Activated T-helper 2 cell treated with anti-CD3 and anti-CD28 coated beads, Interferon-gamma antibody, Interleukin-2, Interleukin-4, amounts not matched to agents 10 μg/mL and 5 μg/mL and 100 μg/mL, durations not matched to agents 14 hours and 24 hours and 36 hours (primary cell): ENCODE measurements at regions of chr7 and their contacts with region 1.

Region 1: GRCh38 chr7:135147899-135148721 is at the start of gene TMEM140:
- DNase-seq: peak; percentile 63
- H3K4me3 Mint-ChIP-seq: peak within 1 kb of the TSS; percentile 86
- H3K27ac Mint-ChIP-seq: peak within 1 kb of the TSS; percentile 97
- H3K4me1 Mint-ChIP-seq: peaks cover 65% of the 10 kb centered on the region
- H3K27me3 Mint-ChIP-seq: no peaks in the 10 kb centered on the region
- total RNA-seq, gene TMEM140: 3.0 and 4.8 TPM in 2 replicates

Region 2: DNA sequence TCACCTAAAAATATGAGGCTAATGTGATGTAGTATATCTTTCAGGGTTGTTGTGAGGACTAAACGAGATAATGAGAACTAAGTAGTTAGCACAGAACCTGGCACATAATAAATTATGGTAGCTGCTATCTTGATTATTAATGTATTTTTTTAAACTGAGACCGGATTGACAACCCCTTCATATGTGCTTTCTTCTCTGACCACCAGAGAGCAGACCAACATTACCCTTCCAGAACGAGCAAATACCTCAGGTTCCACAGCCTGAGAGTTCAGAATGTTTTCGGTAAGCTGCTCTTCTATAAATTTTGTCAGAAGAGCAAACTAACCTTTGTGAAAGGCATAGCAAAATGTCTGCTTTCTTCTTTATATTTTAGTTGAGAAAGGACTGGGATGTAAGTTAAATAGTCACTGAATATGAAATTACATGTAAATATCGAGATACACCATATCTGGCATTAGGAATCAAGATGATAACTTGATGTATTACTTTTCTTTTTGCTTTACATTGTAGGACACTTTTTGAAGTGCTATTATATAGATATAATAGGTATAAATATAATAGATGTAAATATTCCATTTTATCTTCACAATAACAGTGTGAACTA is 515.1 kb before region 1 on chr7:
- intact Hi-C with region 1: loop called (anchors 5 kb)
- DNase-seq: no peak
- H3K4me3 Mint-ChIP-seq: no peak overlapping the region
- H3K27ac Mint-ChIP-seq: no peak overlapping the region
- H3K4me1 Mint-ChIP-seq: peaks cover 25% of the 10 kb centered on the region
- H3K27me3 Mint-ChIP-seq: peaks cover 8% of the 10 kb centered on the region

Region 3: DNA sequence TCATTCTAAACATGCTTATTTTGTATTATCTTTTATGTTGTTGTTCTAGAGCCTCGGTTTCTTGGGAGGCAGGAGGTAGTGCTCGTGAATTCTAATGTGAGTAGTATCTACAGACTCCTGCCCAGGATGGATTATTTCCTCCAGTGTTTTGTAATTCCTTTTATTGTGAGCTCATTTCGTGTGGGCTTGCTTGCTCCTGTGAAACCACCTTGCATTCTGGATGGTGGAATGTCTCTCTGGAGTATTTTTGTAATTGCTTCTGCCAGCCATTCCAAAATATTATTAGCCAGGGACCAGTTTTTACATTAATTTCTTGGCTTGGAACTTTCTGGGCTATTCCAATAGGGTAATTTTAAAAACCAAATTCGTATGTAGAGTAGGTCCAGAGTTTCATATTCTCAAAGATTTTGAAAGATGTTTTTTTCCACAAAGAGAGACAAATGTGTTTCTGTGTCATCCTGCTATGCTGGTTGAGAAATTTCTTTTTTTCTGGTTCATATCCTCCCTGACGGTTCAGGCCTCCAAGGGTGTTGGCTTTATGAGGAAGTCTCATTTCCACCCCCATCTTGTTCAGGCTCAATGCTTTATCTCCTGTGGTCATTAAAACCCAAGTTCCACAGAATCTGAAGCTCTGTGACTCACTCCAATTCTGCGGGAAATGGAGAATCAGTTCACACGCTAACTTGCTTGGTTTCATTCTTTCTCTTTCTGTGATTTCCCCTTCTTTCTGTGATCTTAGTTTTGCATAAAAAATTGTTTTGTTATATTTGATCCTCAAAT is 410.4 kb before region 1 on chr7:
- intact Hi-C with region 1: loop called (anchors 5 kb)
- DNase-seq: peak; percentile 28
- H3K4me3 Mint-ChIP-seq: no peak overlapping the region
- H3K27ac Mint-ChIP-seq: peak overlapping the region; percentile 90
- H3K4me1 Mint-ChIP-seq: peaks cover 55% of the 10 kb centered on the region
- H3K27me3 Mint-ChIP-seq: no peaks in the 10 kb centered on the region

Region 4: DNA sequence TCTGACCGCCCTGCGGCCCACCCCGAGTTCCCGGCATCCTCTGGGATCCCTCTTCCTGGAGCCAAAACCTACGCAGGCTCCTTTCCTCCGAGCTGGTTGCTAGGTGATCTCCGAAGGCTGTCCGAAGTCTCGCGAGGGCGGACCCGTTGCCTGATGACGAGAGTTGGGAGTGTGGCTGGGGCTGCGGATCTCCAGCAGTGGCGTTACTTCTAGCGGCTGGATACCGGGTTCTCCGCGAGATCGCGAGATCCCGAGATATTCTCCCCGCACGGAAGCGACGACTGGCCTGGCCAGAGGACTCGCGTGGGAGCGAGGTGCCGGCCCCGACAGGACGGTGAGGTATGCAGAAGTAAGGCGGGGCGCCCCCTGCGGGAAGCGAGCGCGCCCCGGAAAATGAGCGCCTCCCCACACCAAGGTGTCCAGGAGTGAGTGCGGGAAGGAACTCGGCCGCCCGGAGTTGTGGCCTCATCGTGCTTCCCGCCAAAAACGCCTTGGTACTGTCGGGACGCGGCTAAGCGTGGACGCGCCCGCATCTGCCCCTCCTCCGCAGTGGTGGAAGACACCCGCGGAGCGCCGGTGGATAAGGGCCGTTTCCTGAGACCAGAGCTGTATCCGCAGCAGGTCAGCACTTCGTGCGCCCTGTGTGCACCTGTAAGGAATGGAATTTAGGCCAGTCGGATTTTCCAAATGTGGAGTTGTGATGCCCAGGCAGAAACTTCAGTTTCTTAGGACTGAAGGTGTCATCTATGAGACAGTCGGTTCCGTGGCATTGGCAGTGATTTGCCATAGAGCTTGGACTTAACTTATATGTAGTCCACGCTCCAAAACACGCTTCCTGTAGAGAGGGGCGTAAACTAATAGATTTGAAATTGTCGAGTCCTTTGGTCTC is 161.5 kb before region 1 on chr7 and contains the start of gene AGBL3:
- intact Hi-C with region 1: loop called (anchors 2 kb)
- DNase-seq: peak; percentile 85
- H3K4me3 Mint-ChIP-seq: peak within 1 kb of the TSS; percentile 95
- H3K27ac Mint-ChIP-seq: peak within 1 kb of the TSS; percentile 94
- H3K4me1 Mint-ChIP-seq: peaks cover 33% of the 10 kb centered on the region
- H3K27me3 Mint-ChIP-seq: no peaks in the 10 kb centered on the region
- total RNA-seq, gene AGBL3: 1.6 and 3.9 TPM in 2 replicates

Region 5: GRCh38 chr7:135211179-135211945 is 63.3 kb after region 1 on chr7 and contains the start of gene WDR91:
- intact Hi-C with region 1: loop called (anchors 2 kb)
- DNase-seq: peak; percentile 86
- H3K4me3 Mint-ChIP-seq: peak within 1 kb of the TSS; percentile 95
- H3K27ac Mint-ChIP-seq: peak within 1 kb of the TSS; percentile 96
- H3K4me1 Mint-ChIP-seq: peaks cover 32% of the 10 kb centered on the region
- H3K27me3 Mint-ChIP-seq: no peaks in the 10 kb centered on the region
- total RNA-seq, gene WDR91: 19.2 and 22.6 TPM in 2 replicates